Esophagus muscularis mucosa (tissue), 4 donors: ENCODE measurements at regions of chr15 and their contacts with region 1.

Region 1: DNA sequence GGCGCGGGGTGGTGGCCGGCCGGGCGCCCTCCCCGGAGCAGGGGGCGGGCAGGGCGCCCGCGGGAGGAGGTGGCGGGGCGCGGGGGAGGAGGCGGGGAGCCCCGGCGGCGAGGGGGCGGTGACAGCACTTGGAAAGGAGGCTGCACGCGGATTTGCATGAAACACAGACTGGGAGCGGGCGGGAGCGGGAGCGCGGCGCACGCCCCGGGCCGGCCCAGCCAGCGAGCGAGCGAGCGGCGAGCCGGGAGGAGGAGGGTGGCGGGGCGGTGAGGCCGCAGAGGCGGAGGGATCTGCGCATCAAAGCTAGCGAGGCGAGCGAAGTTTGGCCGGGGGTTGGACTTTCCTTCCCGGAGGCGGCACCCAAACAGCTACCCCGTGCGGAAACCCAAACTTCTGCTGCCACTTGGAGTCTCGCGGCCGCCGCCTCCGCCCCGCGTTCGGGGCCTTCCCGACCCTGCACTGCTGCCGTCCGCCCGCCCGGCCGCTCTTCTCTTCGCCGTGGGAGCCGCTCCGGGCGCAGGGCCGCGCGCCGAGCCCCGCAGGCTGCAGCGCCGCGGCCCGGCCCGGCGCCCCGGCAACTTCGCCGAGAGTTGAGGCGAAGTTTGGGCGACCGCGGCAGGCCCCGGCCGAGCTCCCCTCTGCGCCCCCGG is at the start of gene SMAD3:
- DNase-seq: peak; percentile 96
- H3K4me3 ChIP-seq: peak within 1 kb of the TSS; percentile 61 to 92 (median 80)
- H3K27ac ChIP-seq: peak within 1 kb of the TSS; percentile 83 to 94 (median 90)
- H3K4me1 ChIP-seq: peaks cover 27 to 54% (median 46%) of the 10 kb centered on the region in 4 donors
- H3K27me3 ChIP-seq: no peaks in the 10 kb centered on the region
- CTCF ChIP-seq: no peak
- EP300 ChIP-seq: no peak
- POLR2A ChIP-seq: peak; percentile 62
- total RNA-seq, gene SMAD3: 21.2 to 32.3 (median 24.2) TPM

Region 2: DNA sequence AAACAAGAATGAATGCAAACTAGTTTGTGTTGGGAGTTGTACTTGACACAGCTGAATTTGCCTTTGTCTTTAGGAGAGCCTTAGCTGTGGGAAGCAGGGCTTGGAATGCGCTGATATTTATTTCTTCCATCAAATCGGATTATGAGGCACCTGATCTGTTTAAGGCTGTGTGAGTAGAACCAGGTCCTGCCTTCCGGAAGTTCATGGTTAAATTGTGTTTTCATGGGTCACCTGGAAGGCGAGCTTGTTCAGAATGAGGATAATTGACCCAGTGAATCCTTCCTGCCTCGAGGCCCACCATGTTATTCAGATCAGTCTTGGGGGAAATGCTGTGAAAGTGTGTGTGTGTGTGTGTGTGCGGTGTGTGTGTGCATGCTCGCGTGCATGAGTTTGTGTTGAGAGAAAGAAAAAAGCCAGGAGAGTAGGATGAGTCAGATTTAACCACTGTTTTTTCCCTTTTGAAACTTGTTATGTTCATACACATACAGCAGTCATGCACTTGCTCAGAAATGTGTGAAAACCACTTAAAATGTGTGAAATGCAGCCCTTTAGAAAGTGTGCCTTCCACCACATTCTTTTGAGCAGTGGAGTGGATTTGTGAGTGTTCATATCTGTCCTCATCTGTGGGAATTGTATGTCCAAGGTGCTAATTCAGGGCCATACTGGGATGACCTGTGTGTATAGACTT is 36.5 kb after region 1 on chr15:
- intact Hi-C with region 1: loop called (anchors 5 kb)
- DNase-seq: no peak
- H3K4me3 ChIP-seq: no peak overlapping the region
- H3K27ac ChIP-seq: peak overlapping the region in 3 of 4 donors; percentile 4 to 44 (median 15)
- H3K4me1 ChIP-seq: peaks cover 66 to 96% (median 92%) of the 10 kb centered on the region in 4 donors
- H3K27me3 ChIP-seq: no peaks in the 10 kb centered on the region
- CTCF ChIP-seq: no peak
- EP300 ChIP-seq: no peak
- POLR2A ChIP-seq: no peak

Region 3: GRCh38 chr15:67189326-67190051 is 123.9 kb after region 1 on chr15:
- intact Hi-C with region 1: loop called (anchors 5 kb)
- DNase-seq: peak; percentile 95
- H3K4me3 ChIP-seq: no peak overlapping the region
- H3K27ac ChIP-seq: peak overlapping the region; percentile 73 to 84 (median 78)
- H3K4me1 ChIP-seq: peaks cover 73 to 91% (median 87%) of the 10 kb centered on the region in 4 donors
- H3K27me3 ChIP-seq: no peaks in the 10 kb centered on the region
- CTCF ChIP-seq: no peak
- EP300 ChIP-seq: no peak
- POLR2A ChIP-seq: no peak

Region 4: GRCh38 chr15:67254238-67255175 is 188.9 kb after region 1 on chr15 and contains the starts of genes AAGAB and IQCH:
- intact Hi-C with region 1: loop called (anchors 2 kb)
- DNase-seq: peak; percentile 99
- H3K4me3 ChIP-seq: peak within 1 kb of the TSS; percentile 81 to 88 (median 86)
- H3K27ac ChIP-seq: peak within 1 kb of the TSS; percentile 86 to 94 (median 90)
- H3K4me1 ChIP-seq: peaks cover 9 to 21% (median 19%) of the 10 kb centered on the region in 4 donors
- H3K27me3 ChIP-seq: no peaks in the 10 kb centered on the region
- CTCF ChIP-seq: peak in 1 of 3 experiments; percentile 27
- EP300 ChIP-seq: no peak
- POLR2A ChIP-seq: peak; percentile 64
- total RNA-seq, gene AAGAB: 21.3 to 37.8 (median 29.0) TPM
- total RNA-seq, gene IQCH: 0.58 to 2.4 (median 1.2) TPM